ENCODE measurements at regions of chr11 and their contacts with region 1.

Region 1: GRCh38 chr11:87275176-87275575 is 237.4 kb downstream of the TMEM135 start:
- DNase-seq: no peak
- ATAC-seq: no peak

Region 2: GRCh38 chr11:86940122-86940777 is 334.9 kb before region 1 on chr11:
- intact Hi-C with region 1: loop called in 1 of 2 experiments (anchors 5 kb)
- DNase-seq: peak in 1 of 2 donors; percentile 37
- ATAC-seq: peak; percentile 14

Region 3: GRCh38 chr11:87097582-87097981 is 177.6 kb before region 1 on chr11:
- intact Hi-C with region 1: no loop called
- DNase-seq: peak; percentile 35 to 64
- ATAC-seq: peak; percentile 100